Psoas muscle (tissue), 8 donors: ENCODE measurements at regions of chr1 and their contacts with region 1.

Region 1: DNA sequence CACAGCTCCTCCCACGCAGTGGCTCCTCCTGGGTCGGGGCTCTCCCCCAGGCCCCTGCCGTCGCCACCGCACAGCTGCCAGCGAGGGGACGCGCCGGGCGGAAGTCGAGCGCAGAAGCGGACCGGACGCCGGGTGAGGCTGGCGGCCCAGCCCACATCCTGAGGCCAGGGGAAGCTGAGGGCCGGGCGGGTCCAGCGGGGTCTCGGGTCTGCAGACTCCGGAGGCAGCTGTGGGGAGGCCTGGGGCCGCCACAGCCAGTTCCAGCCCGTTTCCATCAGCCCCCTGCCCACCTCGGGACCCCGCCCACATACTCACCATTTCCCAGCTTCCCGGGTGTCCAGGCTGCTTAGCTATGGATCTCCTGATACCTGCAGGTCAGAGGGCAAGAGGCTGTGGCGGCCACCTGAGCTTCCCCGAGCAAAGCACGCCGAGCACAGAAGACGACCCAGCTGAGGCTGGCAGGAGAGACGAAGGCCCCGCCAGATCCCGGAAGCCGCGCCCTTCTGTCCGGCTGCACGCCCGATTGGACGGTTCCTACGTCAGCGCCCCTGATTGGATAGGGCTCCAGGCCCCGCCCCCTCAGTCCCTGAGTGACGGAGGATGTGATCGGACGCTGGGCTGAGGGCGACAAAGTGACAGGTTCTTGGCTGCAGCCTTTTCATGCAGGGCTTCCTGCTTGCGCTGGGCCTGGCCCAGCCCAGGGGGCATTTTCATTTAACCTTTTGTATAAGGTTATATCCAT is 38.7 kb upstream of the ZNF124 start:
- DNase-seq: peak; percentile 98 to 99
- ATAC-seq: peak; percentile 100
- H3K4me3 ChIP-seq: peak overlapping the region; percentile 96
- H3K27ac ChIP-seq: peak overlapping the region; percentile 87
- H3K4me1 ChIP-seq: peaks cover 15% of the 10 kb centered on the region
- H3K27me3 ChIP-seq: no peaks in the 10 kb centered on the region
- CTCF ChIP-seq: no peak

Region 2: DNA sequence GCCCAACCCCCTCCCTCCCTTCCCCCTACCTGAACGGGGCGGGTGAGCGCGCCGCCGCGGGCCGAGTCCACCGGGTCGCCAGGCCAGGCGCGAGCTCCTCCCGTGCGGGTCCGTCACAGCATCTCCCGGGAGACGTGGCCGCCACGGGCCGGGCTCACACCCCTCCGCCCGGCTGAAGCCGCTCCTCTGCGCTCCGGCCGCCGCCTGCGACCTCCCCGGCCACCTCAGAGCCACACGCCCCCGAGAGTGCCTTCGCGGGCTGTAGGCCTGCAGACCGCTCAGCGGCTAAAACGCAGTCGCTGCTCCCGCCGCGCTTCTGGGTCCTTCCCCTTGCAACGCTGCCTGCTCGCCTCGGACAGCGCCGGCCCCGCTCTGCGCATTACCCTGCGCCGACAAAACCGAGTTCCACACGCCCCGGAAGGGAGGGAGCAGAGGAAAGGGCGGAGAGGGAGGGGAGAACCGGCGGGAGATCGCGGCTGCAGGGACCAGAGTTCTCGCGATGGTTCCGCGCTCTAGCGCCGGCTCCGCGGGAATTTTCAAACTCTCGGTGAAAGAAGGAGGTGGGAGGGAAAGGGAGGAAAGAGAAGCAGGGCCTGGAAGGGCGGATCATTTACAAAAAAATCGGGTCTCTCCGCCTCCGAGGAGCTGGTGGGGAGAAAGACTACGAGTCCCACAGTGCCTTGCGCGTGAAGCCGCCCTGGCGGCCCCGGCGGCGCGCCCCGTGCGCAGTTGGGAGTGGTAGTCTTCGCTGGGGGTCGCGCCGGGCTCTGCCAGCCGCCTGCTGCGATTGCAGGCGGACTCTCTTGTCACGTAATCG is 278.8 kb before region 1 on chr1 and contains the start of gene AHCTF1:
- intact Hi-C with region 1: loop called in 1 of 2 experiments (anchors 10 kb)
- DNase-seq: peak; percentile 95 to 98
- ATAC-seq: peak; percentile 97 to 98 (median 98)
- H3K4me3 ChIP-seq: peak within 1 kb of the TSS; percentile 98
- H3K27ac ChIP-seq: peak within 1 kb of the TSS; percentile 98
- H3K4me1 ChIP-seq: peaks cover 20% of the 10 kb centered on the region
- H3K27me3 ChIP-seq: no peaks in the 10 kb centered on the region
- CTCF ChIP-seq: no peak
- total RNA-seq, gene AHCTF1: 16.8 to 29.6 (median 25.3) TPM

Region 3: DNA sequence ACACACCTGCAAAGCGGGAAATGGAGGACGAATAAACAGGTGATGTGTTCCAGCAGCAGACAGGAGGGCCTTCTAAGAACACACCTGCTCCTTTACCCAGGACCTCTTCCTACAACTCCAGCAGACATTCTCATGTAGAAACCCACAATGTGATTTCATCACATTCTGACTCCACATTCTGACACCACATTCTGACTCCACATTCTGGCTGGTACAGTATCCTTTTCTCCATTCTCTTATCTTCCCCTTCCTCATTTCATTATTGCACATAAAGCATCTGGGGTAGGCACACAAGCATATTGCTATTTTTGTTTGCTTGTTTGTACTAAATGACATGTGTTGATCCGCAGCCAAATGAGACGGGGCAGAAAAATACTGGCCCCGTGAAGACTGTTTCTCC is 35.1 kb before region 1 on chr1:
- intact Hi-C with region 1: loop called in 1 of 2 experiments (anchors 2 kb)
- DNase-seq: no peak
- ATAC-seq: no peak
- H3K4me3 ChIP-seq: no peak overlapping the region
- H3K27ac ChIP-seq: no peak overlapping the region
- H3K4me1 ChIP-seq: no peaks in the 10 kb centered on the region
- H3K27me3 ChIP-seq: no peaks in the 10 kb centered on the region
- CTCF ChIP-seq: no peak

Region 4: GRCh38 chr1:247331172-247331991 is 120.8 kb after region 1 on chr1 and contains the start of gene ZNF496:
- intact Hi-C with region 1: loop called in 1 of 2 experiments (anchors 5 kb)
- DNase-seq: peak; percentile 87 to 95
- ATAC-seq: peak; percentile 92 to 95 (median 94)
- H3K4me3 ChIP-seq: peak within 1 kb of the TSS; percentile 99
- H3K27ac ChIP-seq: peak within 1 kb of the TSS; percentile 95
- H3K4me1 ChIP-seq: peaks cover 40% of the 10 kb centered on the region
- H3K27me3 ChIP-seq: no peaks in the 10 kb centered on the region
- CTCF ChIP-seq: no peak
- total RNA-seq, gene ZNF496: 19.5 to 24.2 (median 22.9) TPM

Region 5: GRCh38 chr1:247769603-247770002 is 559.1 kb after region 1 on chr1:
- intact Hi-C with region 1: no loop called
- DNase-seq: no peak
- ATAC-seq: no peak
- H3K4me3 ChIP-seq: no peak overlapping the region
- H3K27ac ChIP-seq: no peak overlapping the region
- H3K4me1 ChIP-seq: no peaks in the 10 kb centered on the region
- H3K27me3 ChIP-seq: no peaks in the 10 kb centered on the region
- CTCF ChIP-seq: no peak